B cell (primary cell): ENCODE measurements at regions of chr3 and their contacts with region 1.

Region 1: GRCh38 chr3:69084326-69085167 is at the start of gene ARL6IP5:
- DNase-seq: peak; percentile 96
- ATAC-seq: peak; percentile 75
- H3K4me3 ChIP-seq: peak within 1 kb of the TSS; percentile 82 to 96 (median 92)
- H3K4me3 Mint-ChIP-seq: peak within 1 kb of the TSS; percentile 95
- H3K27ac ChIP-seq: peak within 1 kb of the TSS; percentile 87 to 95
- H3K27ac Mint-ChIP-seq: peak within 1 kb of the TSS; percentile 97
- H3K4me1 ChIP-seq: peaks cover 66 to 72% of the 10 kb centered on the region in 2 donors
- H3K4me1 Mint-ChIP-seq: peaks cover 72% of the 10 kb centered on the region
- H3K27me3 ChIP-seq: no peaks in the 10 kb centered on the region
- H3K27me3 Mint-ChIP-seq: no peaks in the 10 kb centered on the region
- CTCF ChIP-seq: no peak
- total RNA-seq, gene ARL6IP5: 89.1 and 89.5 TPM in 2 replicates

Region 2: DNA sequence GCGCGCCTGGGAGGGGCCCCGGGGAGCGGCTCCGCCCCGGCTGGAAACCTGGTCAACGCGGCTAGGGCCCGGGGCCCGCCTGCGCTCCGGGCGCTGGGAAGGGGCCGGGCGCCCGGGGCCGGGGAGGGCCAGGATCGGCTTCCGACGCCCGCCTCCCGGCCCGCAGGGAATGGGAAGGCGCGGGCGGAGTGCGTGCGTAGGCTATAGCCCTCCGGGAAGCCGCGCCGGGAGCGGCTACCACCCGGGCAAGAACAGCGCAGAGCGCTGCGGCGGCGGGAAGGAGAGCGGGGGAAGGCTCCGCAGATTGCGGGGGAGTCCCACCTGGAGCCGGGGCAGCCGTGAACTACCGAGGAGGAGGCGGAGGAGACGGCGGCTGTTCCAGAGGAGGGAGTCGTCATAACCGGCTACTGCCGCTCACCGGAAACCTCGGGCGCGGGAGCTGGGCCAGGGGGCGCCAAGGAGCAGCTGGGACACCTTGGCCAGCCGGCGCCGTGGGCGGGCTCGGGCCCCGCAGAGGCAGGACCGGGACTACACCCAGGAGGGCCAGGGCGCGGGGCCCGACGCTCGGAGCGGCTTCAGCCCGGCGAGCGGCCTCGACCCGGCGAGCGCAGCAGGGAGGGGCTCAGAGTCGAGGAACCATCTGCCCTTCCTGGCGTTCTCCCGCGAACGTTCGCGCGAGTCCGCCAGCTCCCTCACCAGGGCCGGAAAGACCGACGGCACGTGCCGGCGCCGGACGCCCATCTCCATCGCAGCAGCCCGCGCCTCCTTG is 71.1 kb before region 1 on chr3 and contains the start of gene EOGT:
- CTCF ChIA-PET with region 1: interaction called, 6 read pairs
- POLR2A ChIA-PET with region 1: interaction called, 6 read pairs
- intact Hi-C with region 1: loop called (anchors 1 kb)
- DNase-seq: peak; percentile 81
- ATAC-seq: peak; percentile 88
- H3K4me3 ChIP-seq: peak within 1 kb of the TSS; percentile 39 to 79 (median 72)
- H3K4me3 Mint-ChIP-seq: peak within 1 kb of the TSS; percentile 92
- H3K27ac ChIP-seq: peak within 1 kb of the TSS in 1 of 2 donors; percentile 47
- H3K27ac Mint-ChIP-seq: peak within 1 kb of the TSS; percentile 67
- H3K4me1 ChIP-seq: peaks cover 6 to 11% of the 10 kb centered on the region in 2 donors
- H3K4me1 Mint-ChIP-seq: peaks cover 10% of the 10 kb centered on the region
- H3K27me3 ChIP-seq: no peaks in the 10 kb centered on the region
- H3K27me3 Mint-ChIP-seq: no peaks in the 10 kb centered on the region
- CTCF ChIP-seq: peak; percentile 49
- total RNA-seq, gene EOGT: 11.3 and 15.5 TPM in 2 replicates

Region 3: GRCh38 chr3:69072928-69073327 is 11.6 kb before region 1 on chr3:
- CTCF ChIA-PET with region 1: no interaction called
- POLR2A ChIA-PET with region 1: no interaction called
- intact Hi-C with region 1: no loop called
- DNase-seq: no peak
- ATAC-seq: no peak
- H3K4me3 ChIP-seq: no peak overlapping the region
- H3K4me3 Mint-ChIP-seq: no peak overlapping the region
- H3K27ac ChIP-seq: no peak overlapping the region
- H3K27ac Mint-ChIP-seq: no peak overlapping the region
- H3K4me1 ChIP-seq: peaks cover 0 to 8% of the 10 kb centered on the region in 2 donors
- H3K4me1 Mint-ChIP-seq: peaks cover 26% of the 10 kb centered on the region
- H3K27me3 ChIP-seq: no peaks in the 10 kb centered on the region
- H3K27me3 Mint-ChIP-seq: no peaks in the 10 kb centered on the region
- CTCF ChIP-seq: no peak

Region 4: DNA sequence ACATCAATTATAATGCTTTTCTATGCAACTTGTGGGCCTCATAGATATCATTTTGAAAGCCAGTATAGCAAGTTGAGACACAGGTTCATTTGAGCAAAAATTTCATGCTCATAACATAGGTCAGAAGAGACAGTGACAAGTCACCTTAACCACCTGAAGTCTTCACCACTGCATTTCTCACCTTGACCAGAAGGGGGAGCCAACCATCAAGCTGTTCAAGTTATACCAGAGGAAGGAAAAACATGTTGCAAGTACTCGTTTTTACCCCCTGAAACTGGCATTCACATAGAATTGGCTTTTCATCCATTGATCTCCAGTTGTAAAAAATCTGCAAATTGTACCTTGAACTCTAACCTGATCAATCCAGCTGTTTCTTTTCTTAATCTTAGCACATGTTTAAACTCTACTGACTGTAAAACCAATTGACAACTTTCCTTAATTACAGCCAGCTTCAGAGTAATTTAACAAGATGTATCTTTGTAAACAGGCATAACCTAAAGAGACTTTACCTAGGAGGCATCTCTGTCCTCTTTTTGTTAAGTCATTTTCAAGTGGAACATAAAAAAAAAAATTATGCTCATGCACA is 36.4 kb after region 1 on chr3:
- CTCF ChIA-PET with region 1: interaction called, 9 read pairs
- POLR2A ChIA-PET with region 1: interaction called, 3 read pairs
- intact Hi-C with region 1: loop called (anchors 5 kb)
- DNase-seq: peak; percentile 83
- ATAC-seq: peak; percentile 80
- H3K4me3 ChIP-seq: no peak overlapping the region
- H3K4me3 Mint-ChIP-seq: no peak overlapping the region
- H3K27ac ChIP-seq: no peak overlapping the region
- H3K27ac Mint-ChIP-seq: no peak overlapping the region
- H3K4me1 ChIP-seq: no peaks in the 10 kb centered on the region
- H3K4me1 Mint-ChIP-seq: peaks cover 5% of the 10 kb centered on the region
- H3K27me3 ChIP-seq: no peaks in the 10 kb centered on the region
- H3K27me3 Mint-ChIP-seq: no peaks in the 10 kb centered on the region
- CTCF ChIP-seq: peak; percentile 99